A549 (cell line): ENCODE measurements at regions of chr20 and their contacts with region 1.

Region 1: GRCh38 chr20:8389381-8390036 is 257.4 kb downstream of the PLCB1 start:
- DNase-seq: peak; percentile 9 to 51
- ATAC-seq: peak; percentile 50 to 65; a peak in 3 of 6 replicates
- H3K4me3 ChIP-seq: no peak overlapping the region
- H3K27ac ChIP-seq: no peak overlapping the region
- H3K4me1 ChIP-seq: no peaks in the 10 kb centered on the region
- CTCF ChIP-seq: peak; percentile 77
- EP300 ChIP-seq: no peak
- POLR2A ChIP-seq: no peak
- RAD21 ChIP-seq: peak; percentile 55 to 67

Region 2: GRCh38 chr20:8043687-8044282 is 345.7 kb before region 1 on chr20:
- CTCF ChIA-PET with region 1: interaction called, 25 read pairs
- POLR2A ChIA-PET with region 1: no interaction called
- DNase-seq: peak; percentile 70 to 71
- ATAC-seq: peak; percentile 65 to 94; a peak in 3 of 6 replicates
- H3K4me3 ChIP-seq: no peak overlapping the region
- H3K27ac ChIP-seq: no peak overlapping the region
- H3K4me1 ChIP-seq: peaks cover 5% of the 10 kb centered on the region; the same call in 1 of the 3 replicates
- CTCF ChIP-seq: peak; percentile 91
- EP300 ChIP-seq: no peak
- POLR2A ChIP-seq: no peak
- RAD21 ChIP-seq: peak; percentile 75 to 76

Region 3: GRCh38 chr20:8131598-8132483 is 257.7 kb before region 1 on chr20 and contains the start of gene PLCB1:
- CTCF ChIA-PET with region 1: interaction called, 13 read pairs
- POLR2A ChIA-PET with region 1: no interaction called
- DNase-seq: peak; percentile 73 to 82
- ATAC-seq: peak; percentile 97 to 99
- H3K4me3 ChIP-seq: peak within 1 kb of the TSS; percentile 60
- H3K27ac ChIP-seq: peak within 1 kb of the TSS; percentile 40 to 73; a peak in 4 of 6 replicates
- H3K4me1 ChIP-seq: no peaks in the 10 kb centered on the region; the same call in 2 of the 3 replicates
- CTCF ChIP-seq: peak; percentile 78
- EP300 ChIP-seq: no peak
- POLR2A ChIP-seq: no peak
- RAD21 ChIP-seq: peak; percentile 84 to 98
- polyA plus RNA-seq, gene PLCB1: 5.9 and 6.3 TPM in 2 replicates

Region 4: DNA sequence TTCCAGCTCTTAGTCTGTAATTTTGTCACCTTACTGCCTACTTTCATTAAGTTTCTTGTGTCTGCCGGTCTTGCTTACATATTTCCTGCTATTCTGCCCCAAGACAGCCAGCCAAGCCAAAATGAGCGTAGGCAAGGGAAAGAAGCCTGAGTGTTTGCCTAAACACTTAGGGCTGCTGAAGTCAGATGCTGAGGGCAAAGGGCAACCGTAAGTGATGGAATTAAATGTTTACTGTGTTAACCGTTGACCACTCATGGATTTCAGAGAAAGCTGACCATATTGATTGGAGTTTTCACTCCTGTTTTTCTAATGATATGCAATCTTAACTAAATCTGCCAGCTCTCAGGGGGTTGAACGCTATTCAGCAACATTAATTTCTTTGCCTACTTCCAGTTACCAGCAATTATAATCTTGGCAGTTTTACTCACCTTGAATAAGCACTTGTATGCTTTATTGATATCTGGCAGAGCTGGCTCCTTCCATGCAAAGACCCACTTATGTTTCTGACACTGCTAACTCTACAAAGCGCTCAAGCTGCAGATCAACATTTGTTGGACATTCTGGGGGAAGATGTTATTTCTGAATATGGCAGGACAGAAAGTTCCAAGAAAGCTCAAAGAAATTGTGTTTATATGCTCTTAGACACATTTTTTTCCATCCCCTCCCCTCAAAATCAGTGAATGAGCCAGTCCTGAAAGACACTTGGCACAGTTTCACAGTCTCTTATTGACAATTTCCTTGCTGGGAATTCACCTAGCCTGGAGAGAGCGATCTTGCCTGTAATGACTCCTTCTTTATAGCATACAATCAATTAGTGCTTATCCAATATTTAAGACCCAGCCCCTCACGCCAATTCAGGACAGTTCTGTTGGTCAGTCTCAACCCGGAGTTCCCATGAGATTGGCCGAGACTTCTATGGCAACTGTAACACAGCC is 73.6 kb before region 1 on chr20:
- CTCF ChIA-PET with region 1: no interaction called
- POLR2A ChIA-PET with region 1: no interaction called
- DNase-seq: no peak
- ATAC-seq: no peak
- H3K4me3 ChIP-seq: no peak overlapping the region
- H3K27ac ChIP-seq: no peak overlapping the region
- H3K4me1 ChIP-seq: no peaks in the 10 kb centered on the region
- CTCF ChIP-seq: no peak
- EP300 ChIP-seq: no peak
- POLR2A ChIP-seq: no peak
- RAD21 ChIP-seq: no peak

Region 5: GRCh38 chr20:8372824-8373380 is 16.6 kb before region 1 on chr20:
- CTCF ChIA-PET with region 1: interaction called, 20 read pairs
- POLR2A ChIA-PET with region 1: no interaction called
- DNase-seq: no peak
- ATAC-seq: no peak
- H3K4me3 ChIP-seq: no peak overlapping the region
- H3K27ac ChIP-seq: no peak overlapping the region
- H3K4me1 ChIP-seq: no peaks in the 10 kb centered on the region
- CTCF ChIP-seq: no peak
- EP300 ChIP-seq: no peak
- POLR2A ChIP-seq: no peak
- RAD21 ChIP-seq: no peak

Region 6: DNA sequence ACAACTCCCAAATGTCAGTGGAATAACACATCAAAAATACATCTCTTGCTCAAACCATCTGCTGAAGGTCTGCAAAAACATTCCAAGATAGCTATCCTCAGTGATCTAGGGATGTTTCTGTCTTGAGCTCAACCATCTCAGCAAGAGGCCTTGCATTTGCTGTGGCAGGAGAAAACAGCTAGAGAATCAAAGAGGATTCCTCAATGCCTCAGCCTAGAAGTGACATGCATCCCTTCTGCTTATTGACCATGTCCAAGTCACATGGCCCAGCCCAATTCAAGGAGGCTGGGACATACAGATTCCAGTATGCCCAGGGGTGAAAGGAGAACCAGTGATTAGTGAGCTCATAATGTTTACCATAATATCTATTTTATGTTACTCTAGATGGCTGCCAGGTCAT is 12.0 kb after region 1 on chr20:
- CTCF ChIA-PET with region 1: interaction called, 16 read pairs
- POLR2A ChIA-PET with region 1: no interaction called
- DNase-seq: no peak
- ATAC-seq: no peak
- H3K4me3 ChIP-seq: no peak overlapping the region
- H3K27ac ChIP-seq: no peak overlapping the region
- H3K4me1 ChIP-seq: no peaks in the 10 kb centered on the region
- CTCF ChIP-seq: no peak
- EP300 ChIP-seq: no peak
- POLR2A ChIP-seq: no peak
- RAD21 ChIP-seq: no peak